ENCODE measurements at regions of chr16 and their contacts with region 1.

Region 1: GRCh38 chr16:11604783-11605558 is 18.3 kb upstream of the LITAF start:
- DNase-seq: no peak
- H3K4me3 ChIP-seq: no peak overlapping the region
- H3K27ac ChIP-seq: peak overlapping the region in 1 of 59 donors; percentile 22
- H3K27me3 ChIP-seq: peaks cover 0 to 7% (median 0%) of the 10 kb centered on the region in 45 donors
- CTCF ChIP-seq: no peak

Region 2: DNA sequence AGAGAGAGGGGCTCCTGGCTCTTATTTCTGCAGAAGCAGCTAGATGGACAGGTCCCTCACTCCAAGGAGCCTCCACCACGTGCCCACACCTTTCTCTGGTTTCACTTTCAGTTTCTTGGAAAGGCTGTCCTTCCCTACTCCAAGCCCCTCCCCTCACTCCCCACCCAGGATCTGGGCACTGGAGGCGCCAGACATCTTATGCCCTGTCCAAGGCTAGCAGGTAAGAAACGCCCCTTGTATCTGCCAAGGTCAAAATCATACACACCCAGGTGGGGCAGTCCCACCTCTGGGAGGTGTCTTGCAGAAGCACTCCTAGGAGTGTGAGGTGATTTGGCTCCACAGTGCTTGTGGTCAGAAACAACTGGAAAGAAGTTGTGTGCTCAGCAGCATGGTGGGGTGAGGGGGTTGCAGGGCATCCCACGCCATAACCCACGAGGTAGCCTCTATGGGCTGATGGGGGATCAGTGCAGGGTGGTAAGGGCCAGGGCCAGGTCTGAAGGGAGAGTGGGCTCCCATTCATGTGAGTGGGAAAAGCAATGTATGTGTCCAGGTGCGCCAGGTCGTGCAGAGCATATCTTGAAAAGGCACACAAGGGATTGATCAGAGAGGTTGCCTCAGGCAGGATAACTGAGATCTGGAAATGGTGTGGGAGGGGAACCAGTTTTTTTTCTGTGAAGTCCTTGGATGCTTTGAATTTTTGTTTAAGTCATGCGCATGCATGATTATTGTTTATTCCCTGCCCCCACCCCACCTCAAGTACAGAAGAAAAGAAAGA is 292.1 kb before region 1 on chr16:
- intact Hi-C with region 1: loop called in 1 of 2 experiments (anchors 10 kb)
- DNase-seq: no peak
- H3K4me3 ChIP-seq: no peak overlapping the region
- H3K27ac ChIP-seq: no peak overlapping the region
- H3K27me3 ChIP-seq: peaks cover 0 to 6% (median 0%) of the 10 kb centered on the region in 45 donors
- CTCF ChIP-seq: no peak

Region 3: GRCh38 chr16:11560701-11561449 is 44.1 kb before region 1 on chr16:
- intact Hi-C with region 1: no loop called
- DNase-seq: no peak
- H3K4me3 ChIP-seq: no peak overlapping the region
- H3K27ac ChIP-seq: peak overlapping the region in 43 of 59 donors; percentile 0 to 99 (median 44)
- H3K27me3 ChIP-seq: no peaks in the 10 kb centered on the region
- CTCF ChIP-seq: no peak

Region 4: DNA sequence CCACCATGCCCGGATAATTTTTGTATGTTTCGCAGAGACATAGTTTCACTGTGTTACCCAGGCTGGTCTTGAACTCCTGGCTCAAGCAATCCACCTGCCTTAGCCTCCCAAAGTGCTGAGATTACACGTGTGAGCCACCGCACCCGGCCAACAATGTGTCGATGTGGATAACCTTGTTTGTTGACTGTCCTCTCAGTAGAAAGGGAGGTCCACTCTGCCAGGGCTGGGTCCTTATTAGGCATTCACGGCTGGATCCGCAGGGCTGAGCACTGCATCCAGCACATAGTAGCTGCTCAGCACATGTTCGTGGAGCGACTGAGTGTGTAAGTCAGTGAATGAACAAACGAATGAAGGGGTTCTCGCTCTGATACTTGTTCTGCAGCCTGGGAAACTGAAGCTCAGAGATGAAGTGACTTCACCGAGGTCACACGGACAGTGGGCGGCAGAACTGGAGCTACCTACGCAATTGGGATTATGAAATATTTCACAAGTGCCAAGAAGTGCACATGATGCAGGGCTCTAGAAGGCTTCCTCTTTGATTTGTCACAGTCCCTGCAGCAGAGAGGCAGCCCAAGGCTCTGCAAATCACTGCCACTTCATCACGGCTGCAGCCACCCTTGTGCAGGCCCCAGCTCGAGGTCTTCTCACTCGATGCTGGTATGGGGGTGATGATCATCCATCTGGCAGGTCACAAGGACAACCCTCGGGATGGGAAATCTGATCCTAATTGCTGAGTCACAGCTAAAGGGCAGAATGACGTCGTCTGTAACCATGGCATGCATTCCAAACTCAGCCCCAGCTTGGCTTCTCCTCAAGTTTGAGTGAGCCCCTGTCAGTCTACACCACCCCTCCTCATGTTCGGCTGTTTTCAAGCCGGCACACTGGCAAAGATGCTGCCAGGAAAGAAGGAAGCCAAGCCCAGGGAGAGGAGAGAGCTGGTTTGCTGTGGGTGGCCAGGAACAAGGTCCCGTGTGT is 35.2 kb after region 1 on chr16:
- intact Hi-C with region 1: no loop called
- DNase-seq: peak in 9 of 10 donors; percentile 23 to 77 (median 55)
- H3K4me3 ChIP-seq: peak overlapping the region in 1 of 59 donors; percentile 1
- H3K27ac ChIP-seq: peak overlapping the region in 58 of 59 donors; percentile 24 to 91 (median 84)
- H3K27me3 ChIP-seq: no peaks in the 10 kb centered on the region
- CTCF ChIP-seq: peak in 1 of 56 donors; percentile 19

Measured in dorsolateral prefrontal cortex (tissue), 120 donors.